CD4-positive, alpha-beta memory T cell (primary cell): ENCODE measurements at regions of chr2 and their contacts with region 1.

Region 1: GRCh38 chr2:241865957-241866789 is 3.4 kb upstream of the RTP5 start:
- DNase-seq: no peak
- H3K4me3 ChIP-seq: no peak overlapping the region
- H3K4me3 Mint-ChIP-seq: peak overlapping the region in 3 of 8 donors; percentile 10 to 65 (median 56)
- H3K27ac ChIP-seq: no peak overlapping the region
- H3K27ac Mint-ChIP-seq: peak overlapping the region in 4 of 7 donors; percentile 24 to 87 (median 62)
- H3K4me1 ChIP-seq: peaks cover 78% of the 10 kb centered on the region
- H3K4me1 Mint-ChIP-seq: peaks cover 54 to 80% (median 65%) of the 10 kb centered on the region in 4 donors
- H3K27me3 ChIP-seq: no peaks in the 10 kb centered on the region
- H3K27me3 Mint-ChIP-seq: peaks cover 0 to 5% of the 10 kb centered on the region in 2 donors

Region 2: GRCh38 chr2:241844066-241844728 is 22.0 kb before region 1 on chr2:
- CTCF ChIA-PET with region 1: interaction called, 6 read pairs
- POLR2A ChIA-PET with region 1: interaction called, 10 read pairs
- intact Hi-C with region 1: no loop called
- DNase-seq: peak; percentile 71 to 84 (median 73)
- H3K4me3 ChIP-seq: no peak overlapping the region
- H3K4me3 Mint-ChIP-seq: peak overlapping the region; percentile 76 to 88 (median 84)
- H3K27ac ChIP-seq: peak overlapping the region; percentile 14
- H3K27ac Mint-ChIP-seq: peak overlapping the region; percentile 57 to 94 (median 81)
- H3K4me1 ChIP-seq: peaks cover 34% of the 10 kb centered on the region
- H3K4me1 Mint-ChIP-seq: peaks cover 20 to 42% (median 31%) of the 10 kb centered on the region in 4 donors
- H3K27me3 ChIP-seq: no peaks in the 10 kb centered on the region
- H3K27me3 Mint-ChIP-seq: no peaks in the 10 kb centered on the region